ENCODE measurements at regions of chr17 and their contacts with region 1.

Region 1: GRCh38 chr17:8248751-8249607 is at the start of gene PFAS:
- DNase-seq: peak; percentile 91 to 96 (median 95)
- H3K4me3 ChIP-seq: peak within 1 kb of the TSS; percentile 66 to 99 (median 87)
- H3K27ac ChIP-seq: peak within 1 kb of the TSS; percentile 87 to 100 (median 97)
- H3K27me3 ChIP-seq: no peaks in the 10 kb centered on the region
- CTCF ChIP-seq: peak in 28 of 56 donors; percentile 1 to 56 (median 23)
- total RNA-seq, gene PFAS: 20.3 to 49.9 (median 35.2) TPM

Region 2: DNA sequence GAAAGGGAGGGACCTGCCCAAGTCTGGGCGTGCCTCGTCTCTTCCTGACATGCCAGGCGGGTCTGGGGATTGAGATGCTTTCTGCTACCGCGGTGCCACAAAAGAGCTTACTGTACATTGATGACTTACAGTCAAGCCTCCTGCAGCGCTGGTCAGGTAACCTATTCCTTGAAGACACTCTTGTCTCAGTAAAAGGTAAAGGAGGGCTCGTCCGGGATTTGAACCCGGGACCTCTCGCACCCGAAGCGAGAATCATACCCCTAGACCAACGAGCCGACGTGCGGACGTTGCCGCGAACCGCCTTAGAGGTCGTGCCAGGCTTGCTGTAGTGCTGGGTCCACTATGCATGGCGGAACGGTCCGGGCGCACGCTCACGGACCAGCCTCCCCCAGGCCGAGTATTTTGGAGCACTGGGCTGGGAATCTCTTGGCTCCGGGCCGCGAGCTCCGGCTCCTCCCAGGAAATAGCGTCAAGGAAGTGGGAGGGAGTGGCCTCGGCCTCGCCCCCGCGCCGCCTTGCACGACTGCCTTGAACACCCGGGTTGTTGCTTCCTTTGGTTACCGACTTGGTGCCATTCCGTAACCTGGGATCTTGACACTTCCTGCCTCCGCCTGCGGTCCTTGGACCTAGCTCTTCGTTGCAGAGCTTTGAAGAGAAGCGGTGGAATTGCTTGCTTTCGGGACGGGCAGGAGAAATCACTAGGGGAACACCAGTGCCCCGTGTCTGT is 26.2 kb before region 1 on chr17:
- intact Hi-C with region 1: loop called (anchors 1 to 2 kb)
- DNase-seq: peak; percentile 93 to 97 (median 94)
- H3K4me3 ChIP-seq: peak overlapping the region; percentile 52 to 99 (median 80)
- H3K27ac ChIP-seq: peak overlapping the region; percentile 95 to 100 (median 99)
- H3K27me3 ChIP-seq: no peaks in the 10 kb centered on the region
- CTCF ChIP-seq: peak in 11 of 56 donors; percentile 10 to 57 (median 32)

Region 3: GRCh38 chr17:8288336-8289102 is 39.5 kb after region 1 on chr17 and contains the start of gene RANGRF:
- intact Hi-C with region 1: loop called (anchors 2 to 5 kb)
- DNase-seq: peak; percentile 85 to 93 (median 91)
- H3K4me3 ChIP-seq: peak within 1 kb of the TSS; percentile 60 to 100 (median 91)
- H3K27ac ChIP-seq: peak within 1 kb of the TSS; percentile 62 to 98 (median 90)
- H3K27me3 ChIP-seq: no peaks in the 10 kb centered on the region
- CTCF ChIP-seq: peak in 20 of 56 donors; percentile 2 to 35 (median 20)
- total RNA-seq, gene RANGRF: 15.3 to 31.6 (median 22.9) TPM